Stomach (tissue), 19 donors: ENCODE measurements at regions of chr17 and their contacts with region 1.

Region 1: DNA sequence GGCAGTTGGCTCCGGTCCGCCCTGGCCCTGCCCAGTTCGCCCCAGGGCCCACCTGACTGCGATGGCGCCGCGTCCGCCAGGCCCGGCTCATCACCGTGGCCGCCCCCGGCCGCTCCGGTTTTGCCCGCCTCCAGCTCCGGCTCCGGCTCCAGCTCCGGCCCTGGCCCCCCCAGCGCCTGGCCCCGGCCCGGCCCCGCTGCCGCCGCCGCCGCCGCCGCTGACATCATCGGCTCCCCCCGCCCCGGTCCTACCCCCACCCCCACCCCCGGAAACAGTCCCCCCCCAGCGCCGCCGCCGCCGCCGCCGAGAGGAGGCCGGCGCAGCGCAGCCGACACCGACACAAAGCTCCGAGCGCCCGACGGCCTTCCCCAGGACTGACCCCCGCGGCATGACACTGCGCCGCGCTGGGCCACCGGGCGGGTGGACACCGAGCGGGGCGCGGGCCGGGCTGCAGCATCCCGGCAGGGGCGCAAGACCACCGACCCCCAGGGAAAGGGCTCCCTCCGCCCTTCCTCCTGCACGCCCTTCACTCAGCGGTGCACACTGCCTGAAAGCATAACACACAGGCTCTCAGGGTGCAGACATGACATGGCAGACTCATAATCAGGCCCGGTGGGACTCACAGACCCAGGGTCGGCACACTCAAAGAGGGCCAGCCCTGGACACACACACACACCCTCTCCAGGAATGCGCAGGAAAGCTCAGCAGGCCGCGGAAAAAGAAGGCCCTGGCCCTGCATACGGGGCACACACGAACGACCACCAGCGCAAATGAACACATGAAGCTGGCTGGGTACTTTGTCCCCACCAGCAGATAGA is at the start of gene ZBTB4:
- DNase-seq: peak; percentile 65 to 87
- H3K4me3 ChIP-seq: peak within 1 kb of the TSS; percentile 87 to 99 (median 96)
- H3K27ac ChIP-seq: peak within 1 kb of the TSS; percentile 97 to 100 (median 100)
- H3K4me1 ChIP-seq: peaks cover 38 to 76% (median 67%) of the 10 kb centered on the region in 4 donors
- H3K27me3 ChIP-seq: no peaks in the 10 kb centered on the region
- CTCF ChIP-seq: no peak
- EP300 ChIP-seq: no peak
- POLR2A ChIP-seq: peak in 1 of 4 donors; percentile 24
- total RNA-seq, gene ZBTB4: 15.8 to 31.5 (median 29.0) TPM

Region 2: DNA sequence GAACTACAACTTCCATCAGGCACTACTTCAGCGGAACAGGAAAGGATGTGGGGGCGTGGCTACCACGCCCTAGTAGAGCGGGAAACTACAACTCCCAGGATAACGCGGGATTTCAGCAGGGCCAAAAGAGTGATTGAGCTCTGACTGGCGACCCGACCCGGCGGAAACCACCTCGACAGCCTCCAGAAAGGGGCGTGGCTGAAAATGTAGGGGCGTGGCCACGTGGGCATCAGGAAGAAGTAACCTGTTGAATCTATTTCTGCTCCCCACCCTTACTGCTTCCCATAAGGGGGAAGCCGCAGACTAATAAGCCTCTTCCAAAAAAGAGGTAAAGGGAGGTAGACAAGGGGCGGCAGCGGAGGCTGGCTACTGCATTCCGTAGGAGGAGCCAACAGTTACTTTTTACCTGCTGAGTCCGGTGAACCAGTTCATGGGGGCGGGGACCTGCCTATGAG is 44.4 kb before region 1 on chr17 and contains the start of gene TMEM102:
- intact Hi-C with region 1: loop called (anchors 5 kb)
- DNase-seq: peak; percentile 98 to 99
- H3K4me3 ChIP-seq: peak within 1 kb of the TSS; percentile 47 to 62 (median 54)
- H3K27ac ChIP-seq: peak within 1 kb of the TSS; percentile 79 to 90 (median 84)
- H3K4me1 ChIP-seq: peaks cover 29 to 57% (median 54%) of the 10 kb centered on the region in 4 donors
- H3K27me3 ChIP-seq: peaks cover 10 to 69% (median 28%) of the 10 kb centered on the region in 3 donors
- CTCF ChIP-seq: no peak
- EP300 ChIP-seq: no peak
- POLR2A ChIP-seq: peak in 1 of 4 donors; percentile 44
- total RNA-seq, gene TMEM102: 1.3 to 48.4 (median 9.0) TPM in 4 of 5 donors, not detected in the other

Region 3: GRCh38 chr17:7572588-7573323 is 93.1 kb after region 1 on chr17:
- intact Hi-C with region 1: no loop called
- DNase-seq: peak; percentile 100
- H3K4me3 ChIP-seq: peak overlapping the region; percentile 94 to 100 (median 99)
- H3K27ac ChIP-seq: peak overlapping the region; percentile 97 to 100 (median 99)
- H3K4me1 ChIP-seq: peaks cover 31 to 53% (median 41%) of the 10 kb centered on the region in 4 donors
- H3K27me3 ChIP-seq: no peaks in the 10 kb centered on the region
- CTCF ChIP-seq: peak in 1 of 7 experiments; percentile 24
- EP300 ChIP-seq: no peak
- POLR2A ChIP-seq: peak in 2 of 4 donors; percentile 97